ENCODE measurements at regions of chr1 and their contacts with region 1.

Region 1: DNA sequence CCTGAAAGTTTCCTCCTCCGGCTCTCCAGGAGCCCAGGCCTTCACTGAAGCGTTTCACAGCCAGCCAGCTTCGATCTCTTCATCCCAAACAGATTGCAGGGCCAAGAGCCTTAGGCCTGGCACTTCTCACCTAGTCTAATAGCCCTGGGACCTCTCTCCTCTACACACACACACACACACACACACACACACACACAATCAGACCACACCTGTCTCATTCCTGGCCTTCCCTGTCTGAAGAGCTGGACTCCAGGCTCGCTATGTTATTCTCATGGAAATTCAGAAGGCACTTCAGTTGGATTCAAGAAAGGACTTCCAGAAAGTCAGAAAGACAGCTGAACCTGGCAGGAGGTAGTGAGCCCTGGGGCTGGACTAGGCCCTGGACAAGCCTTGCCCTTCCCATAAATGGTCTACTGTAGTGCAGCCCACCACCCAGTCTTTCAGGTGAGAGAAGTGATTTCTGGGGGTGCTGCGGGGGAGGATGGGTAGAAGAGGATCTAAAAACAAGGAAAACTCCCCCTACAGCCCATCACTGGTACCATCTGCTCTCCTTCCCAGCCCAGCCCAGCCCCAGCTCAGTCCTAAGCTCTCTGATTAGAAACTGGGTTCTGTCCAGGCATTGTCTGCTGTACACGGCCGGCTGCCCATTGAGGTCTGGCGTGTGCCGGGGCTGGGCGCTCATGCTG is 2.7 kb downstream of the KIF21B start:
- DNase-seq: no peak
- ATAC-seq: peak; percentile 55; the same call in 1 of the 2 replicates
- H3K4me3 ChIP-seq: no peak overlapping the region
- H3K27ac ChIP-seq: no peak overlapping the region
- H3K4me1 ChIP-seq: no peaks in the 10 kb centered on the region
- H3K27me3 ChIP-seq: peaks cover 8% of the 10 kb centered on the region
- CTCF ChIP-seq: no peak

Region 2: DNA sequence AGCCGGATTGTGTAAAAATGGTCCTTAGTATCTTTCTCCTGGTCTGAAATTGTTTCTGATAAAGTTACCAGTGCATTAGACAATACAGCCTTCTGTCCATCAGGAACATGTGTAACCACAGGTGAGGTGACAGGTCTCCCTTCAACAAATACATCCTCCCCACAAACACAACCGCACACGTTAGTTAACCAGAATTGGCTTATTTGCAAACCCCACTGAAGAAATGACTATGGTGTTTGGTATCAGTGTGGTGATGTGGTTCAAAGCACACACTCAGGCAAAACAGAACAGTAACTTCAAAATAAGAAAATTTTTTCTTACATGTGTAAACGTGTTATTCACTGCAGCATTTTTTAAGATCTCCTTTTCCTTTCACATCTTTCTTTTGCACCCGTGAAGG is 1510.5 kb before region 1 on chr1:
- CTCF ChIA-PET with region 1: interaction called, 13 read pairs
- POLR2A ChIA-PET with region 1: no interaction called
- in situ Hi-C with region 1: no loop called
- intact Hi-C with region 1: no loop called
- DNase-seq: no peak
- ATAC-seq: no peak
- H3K4me3 ChIP-seq: no peak overlapping the region
- H3K27ac ChIP-seq: no peak overlapping the region
- H3K4me1 ChIP-seq: no peaks in the 10 kb centered on the region
- H3K27me3 ChIP-seq: no peaks in the 10 kb centered on the region
- CTCF ChIP-seq: no peak

Region 3: DNA sequence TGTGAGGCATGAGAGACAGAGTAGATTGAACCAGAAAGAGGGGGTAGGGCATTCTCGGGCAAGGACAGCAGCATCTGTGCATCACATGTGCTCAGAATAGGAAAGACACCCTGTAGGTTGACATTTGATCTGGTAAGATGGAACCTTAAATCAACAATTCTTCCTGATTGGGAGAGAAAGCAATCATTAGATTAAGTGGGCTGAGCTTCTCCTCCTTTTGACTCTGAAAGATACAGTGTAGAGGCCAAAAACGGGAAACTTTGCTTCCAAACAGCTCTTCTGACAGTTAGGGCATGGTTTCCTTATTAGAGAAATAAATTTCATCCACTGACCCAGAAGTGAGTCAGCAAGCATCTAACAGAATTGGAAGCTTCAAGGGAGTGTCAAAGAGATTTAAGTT is 409.9 kb before region 1 on chr1:
- CTCF ChIA-PET with region 1: no interaction called
- POLR2A ChIA-PET with region 1: interaction called, 13 read pairs
- in situ Hi-C with region 1: no loop called
- intact Hi-C with region 1: no loop called
- DNase-seq: no peak
- ATAC-seq: no peak
- H3K4me3 ChIP-seq: no peak overlapping the region
- H3K27ac ChIP-seq: no peak overlapping the region
- H3K4me1 ChIP-seq: no peaks in the 10 kb centered on the region
- H3K27me3 ChIP-seq: no peaks in the 10 kb centered on the region
- CTCF ChIP-seq: no peak

Region 4: DNA sequence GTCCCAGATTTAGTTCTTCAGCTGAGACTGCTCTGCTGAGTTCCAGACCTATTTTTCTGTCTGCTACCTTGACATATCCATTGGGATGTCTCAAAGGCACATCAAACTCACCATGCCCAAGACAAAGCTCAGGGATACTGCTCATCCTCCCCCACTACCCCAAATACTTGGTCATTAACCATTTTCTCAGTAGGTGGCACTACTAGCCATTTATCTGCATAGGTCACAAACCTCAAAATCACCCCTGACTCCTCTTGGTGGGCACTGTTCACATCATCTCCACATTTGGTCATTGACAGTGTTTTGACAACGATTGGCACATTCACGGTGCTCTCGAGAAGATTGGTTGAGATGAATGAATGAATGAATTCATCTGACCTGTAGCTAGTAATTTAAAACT is 59.3 kb after region 1 on chr1:
- CTCF ChIA-PET with region 1: no interaction called
- POLR2A ChIA-PET with region 1: no interaction called
- in situ Hi-C with region 1: no loop called
- intact Hi-C with region 1: no loop called
- DNase-seq: no peak
- ATAC-seq: no peak
- H3K4me3 ChIP-seq: no peak overlapping the region
- H3K27ac ChIP-seq: no peak overlapping the region
- H3K4me1 ChIP-seq: no peaks in the 10 kb centered on the region
- H3K27me3 ChIP-seq: peaks cover 3% of the 10 kb centered on the region
- CTCF ChIP-seq: no peak